Caco-2 (cell line): ENCODE measurements at regions of chr1 and their contacts with region 1.

Region 1: DNA sequence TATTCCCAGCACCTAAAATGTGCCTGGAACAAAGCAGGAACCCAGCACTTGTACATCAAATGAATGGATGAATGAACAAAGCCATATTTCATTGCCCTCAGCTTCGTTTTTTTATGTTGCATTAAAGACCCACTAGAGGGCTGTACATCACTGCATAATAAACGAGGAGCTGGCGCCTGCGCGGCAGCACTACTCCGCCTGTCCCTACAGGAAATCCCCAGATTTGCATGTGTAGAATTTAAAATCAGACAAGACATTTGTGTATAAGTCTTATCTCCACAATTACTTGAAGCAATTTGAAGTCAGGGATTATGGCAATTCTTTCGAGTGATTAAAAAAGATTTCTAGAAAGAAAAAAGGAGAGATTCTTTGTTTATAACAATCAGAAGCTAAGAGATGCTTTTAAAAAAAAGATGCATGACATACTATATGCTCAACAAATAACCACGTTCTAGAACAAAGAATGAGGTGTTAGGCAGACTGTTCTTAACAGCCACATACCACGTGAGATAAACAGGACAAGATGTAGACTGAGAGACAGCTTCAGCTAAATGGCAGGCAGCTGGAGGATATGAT is 5.4 kb upstream of the NEK2 start:
- DNase-seq: peak; percentile 74 to 78
- H3K4me3 ChIP-seq: no peak overlapping the region
- H3K4me3 Mint-ChIP-seq: no peak overlapping the region
- H3K27ac Mint-ChIP-seq: no peak overlapping the region
- H3K4me1 ChIP-seq: no peaks in the 10 kb centered on the region
- H3K4me1 Mint-ChIP-seq: peaks cover 14% of the 10 kb centered on the region
- H3K27me3 ChIP-seq: no peaks in the 10 kb centered on the region
- H3K27me3 Mint-ChIP-seq: no peaks in the 10 kb centered on the region
- CTCF ChIP-seq: peak; percentile 68 to 86

Region 2: DNA sequence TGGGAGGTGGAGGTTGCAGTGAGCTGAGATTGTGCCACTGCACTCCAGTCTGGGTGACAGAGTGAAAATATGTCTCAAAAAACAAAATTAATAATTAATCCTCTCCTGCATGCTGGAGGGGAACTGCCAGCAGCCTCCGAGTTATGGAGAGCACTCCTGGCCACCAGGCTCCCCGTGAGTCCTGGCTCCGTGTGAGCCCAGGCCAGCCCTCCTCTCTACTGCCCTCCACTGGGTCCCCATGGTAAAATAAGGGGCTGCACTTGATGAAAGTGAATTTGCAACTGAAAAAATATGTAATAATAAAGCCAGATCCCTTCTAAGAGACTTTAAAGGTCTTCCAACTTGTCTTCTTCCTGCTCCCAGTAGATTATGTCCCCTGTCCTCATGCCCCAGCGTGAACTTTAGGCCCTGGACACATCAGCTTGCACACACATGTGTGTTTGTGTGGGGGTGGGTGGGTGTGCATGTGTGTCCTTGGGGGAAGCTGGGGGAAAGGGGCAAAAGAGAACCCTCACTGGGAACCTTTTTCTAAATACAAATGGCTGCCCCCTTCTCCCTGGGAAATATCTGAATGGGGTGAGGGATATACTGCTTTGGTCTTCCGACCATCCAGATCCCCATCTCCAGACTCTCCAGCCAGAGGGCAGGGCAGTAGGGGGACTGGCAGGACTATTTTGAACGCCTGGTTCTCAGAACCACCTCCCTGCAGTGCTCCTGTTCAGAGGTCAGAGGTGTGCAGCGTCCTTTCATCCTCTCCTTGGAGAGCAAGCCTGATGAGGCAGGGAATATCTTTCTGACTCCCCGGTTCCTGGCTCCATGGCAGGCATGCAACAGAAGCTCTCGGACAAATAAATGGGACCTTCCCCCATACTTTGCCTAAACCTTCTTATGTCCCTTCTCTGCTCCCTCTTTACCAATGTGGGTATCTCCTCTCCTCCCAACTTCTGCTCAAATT is 31.6 kb before region 1 on chr1:
- CTCF ChIA-PET with region 1: no interaction called
- POLR2A ChIA-PET with region 1: no interaction called
- intact Hi-C with region 1: no loop called
- DNase-seq: peak; percentile 63 to 72
- H3K4me3 ChIP-seq: no peak overlapping the region
- H3K4me3 Mint-ChIP-seq: no peak overlapping the region
- H3K27ac Mint-ChIP-seq: peak overlapping the region; percentile 61
- H3K4me1 ChIP-seq: peaks cover 42% of the 10 kb centered on the region
- H3K4me1 Mint-ChIP-seq: peaks cover 19% of the 10 kb centered on the region
- H3K27me3 ChIP-seq: no peaks in the 10 kb centered on the region
- H3K27me3 Mint-ChIP-seq: no peaks in the 10 kb centered on the region
- CTCF ChIP-seq: peak; percentile 50 to 63

Region 3: GRCh38 chr1:211698161-211699026 is 17.6 kb after region 1 on chr1:
- CTCF ChIA-PET with region 1: interaction called, 10 read pairs
- POLR2A ChIA-PET with region 1: interaction called, 5 read pairs
- intact Hi-C with region 1: no loop called
- DNase-seq: peak; percentile 64 to 74
- H3K4me3 ChIP-seq: no peak overlapping the region
- H3K4me3 Mint-ChIP-seq: no peak overlapping the region
- H3K27ac Mint-ChIP-seq: no peak overlapping the region
- H3K4me1 ChIP-seq: 0 out of 2 replicates have a peak, but pooled peaks cover 5% of the 10 kb centered on the region
- H3K4me1 Mint-ChIP-seq: no peaks in the 10 kb centered on the region
- H3K27me3 ChIP-seq: no peaks in the 10 kb centered on the region
- H3K27me3 Mint-ChIP-seq: no peaks in the 10 kb centered on the region
- CTCF ChIP-seq: peak; percentile 72 to 86

Region 4: DNA sequence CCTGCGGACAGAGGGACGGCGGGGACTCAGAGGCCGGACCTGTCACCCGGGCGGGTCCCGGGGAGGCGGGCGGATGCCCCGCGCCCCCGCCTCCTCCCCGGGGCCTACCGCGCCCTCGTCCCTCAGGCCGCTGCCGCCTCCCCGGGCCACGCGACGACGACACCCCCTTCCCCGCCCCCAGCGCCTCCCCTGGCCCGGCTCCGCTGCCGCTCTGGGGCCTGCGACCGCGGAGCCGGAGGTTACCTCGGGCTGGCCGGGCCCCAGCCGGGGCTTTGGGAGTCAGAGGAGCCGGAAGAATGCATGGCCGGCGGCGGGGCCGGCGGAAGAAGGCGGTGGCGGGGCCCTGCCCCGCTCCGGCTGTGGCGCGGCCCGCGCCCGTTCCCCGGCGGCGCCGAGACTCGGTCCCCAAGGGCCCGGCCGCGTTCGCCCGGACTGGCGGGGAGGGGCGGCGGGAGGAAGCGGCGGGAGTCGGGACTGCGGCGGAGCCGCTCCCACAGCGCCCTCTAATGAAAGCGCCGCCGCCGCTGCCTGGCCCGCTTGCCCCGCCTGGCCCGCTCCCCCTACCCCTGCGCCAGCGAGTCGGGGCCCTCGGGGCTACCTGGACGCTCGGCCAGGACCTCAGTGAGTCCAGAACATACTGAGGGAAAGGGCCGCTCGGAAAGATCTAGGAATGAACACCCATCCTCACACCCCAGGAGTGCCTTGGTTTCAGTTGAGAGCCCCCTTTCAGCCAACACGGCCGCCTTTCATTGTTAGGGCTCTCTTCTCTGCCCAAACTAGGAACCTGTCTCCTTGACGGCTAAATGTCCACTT is 149.7 kb after region 1 on chr1 and contains the start of gene LPGAT1:
- CTCF ChIA-PET with region 1: interaction called, 8 read pairs
- POLR2A ChIA-PET with region 1: no interaction called
- intact Hi-C with region 1: loop called (anchors 1 kb)
- DNase-seq: peak; percentile 70 to 87
- H3K4me3 ChIP-seq: peak within 1 kb of the TSS; percentile 56
- H3K4me3 Mint-ChIP-seq: peak within 1 kb of the TSS; percentile 96
- H3K27ac Mint-ChIP-seq: peak within 1 kb of the TSS; percentile 76
- H3K4me1 ChIP-seq: no peaks in the 10 kb centered on the region
- H3K4me1 Mint-ChIP-seq: peaks cover 5% of the 10 kb centered on the region
- H3K27me3 ChIP-seq: no peaks in the 10 kb centered on the region
- H3K27me3 Mint-ChIP-seq: no peaks in the 10 kb centered on the region
- CTCF ChIP-seq: peak; percentile 49 to 55
- total RNA-seq, gene LPGAT1: 25.6 and 34.0 TPM in 2 replicates

Region 5: GRCh38 chr1:211944733-211945500 is 264.1 kb after region 1 on chr1:
- CTCF ChIA-PET with region 1: interaction called, 12 read pairs
- POLR2A ChIA-PET with region 1: no interaction called
- intact Hi-C with region 1: loop called (anchors 1 kb)
- DNase-seq: peak; percentile 53 to 64
- H3K4me3 ChIP-seq: no peak overlapping the region
- H3K4me3 Mint-ChIP-seq: no peak overlapping the region
- H3K27ac Mint-ChIP-seq: no peak overlapping the region
- H3K4me1 ChIP-seq: no peaks in the 10 kb centered on the region
- H3K4me1 Mint-ChIP-seq: no peaks in the 10 kb centered on the region
- H3K27me3 ChIP-seq: no peaks in the 10 kb centered on the region
- H3K27me3 Mint-ChIP-seq: no peaks in the 10 kb centered on the region
- CTCF ChIP-seq: peak; percentile 37 to 85

Region 6: GRCh38 chr1:212035123-212035834 is 354.4 kb after region 1 on chr1 and contains the starts of genes DTL and INTS7:
- CTCF ChIA-PET with region 1: interaction called, 109 read pairs
- POLR2A ChIA-PET with region 1: interaction called, 14 read pairs
- intact Hi-C with region 1: loop called (anchors 1 kb)
- DNase-seq: peak; percentile 98 to 99
- H3K4me3 ChIP-seq: peak within 1 kb of the TSS; percentile 85
- H3K4me3 Mint-ChIP-seq: peak within 1 kb of the TSS; percentile 96
- H3K27ac Mint-ChIP-seq: peak within 1 kb of the TSS; percentile 96
- H3K4me1 ChIP-seq: no peaks in the 10 kb centered on the region; the same call in 1 of the 2 replicates
- H3K4me1 Mint-ChIP-seq: peaks cover 35% of the 10 kb centered on the region
- H3K27me3 ChIP-seq: no peaks in the 10 kb centered on the region
- H3K27me3 Mint-ChIP-seq: no peaks in the 10 kb centered on the region
- CTCF ChIP-seq: peak; percentile 88 to 89
- total RNA-seq, gene DTL: 20.3 and 23.6 TPM in 2 replicates
- total RNA-seq, gene INTS7: 28.1 and 31.9 TPM in 2 replicates

Region 7: DNA sequence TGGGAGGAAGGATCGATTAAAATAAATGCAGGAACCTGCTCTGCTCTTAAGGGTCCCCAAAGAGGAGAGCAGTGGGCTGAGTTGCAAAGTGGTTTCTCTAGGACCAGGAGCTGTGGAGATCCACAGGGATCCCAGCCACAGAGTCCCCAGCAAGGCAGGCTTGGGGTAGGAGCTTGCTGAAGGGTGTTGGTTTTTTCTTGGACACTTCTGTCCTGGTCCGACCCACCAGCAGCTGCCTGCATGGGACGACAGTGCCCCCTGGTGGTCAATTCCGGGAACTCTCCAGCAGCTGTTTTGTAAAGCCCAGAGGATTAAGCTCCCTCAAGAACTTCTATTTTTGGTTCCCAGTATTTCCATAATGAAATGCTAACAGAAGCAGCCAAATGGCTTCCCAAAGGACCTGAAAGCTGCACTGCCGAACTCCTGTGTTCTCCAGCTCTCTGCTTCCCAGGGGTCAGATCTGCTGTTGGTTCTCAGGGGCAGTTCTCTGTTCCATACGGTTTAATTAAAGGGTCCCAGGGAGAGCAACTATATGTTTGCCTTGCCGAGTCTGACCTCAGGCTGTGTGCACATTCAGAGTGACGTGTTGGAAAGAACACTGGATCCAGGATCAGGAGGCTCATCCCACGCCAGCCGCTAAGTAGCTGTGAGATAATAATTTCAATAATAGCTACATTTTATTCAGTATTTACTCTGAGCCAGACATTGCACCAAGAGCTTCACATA is 775.1 kb after region 1 on chr1:
- CTCF ChIA-PET with region 1: interaction called, 7 read pairs
- POLR2A ChIA-PET with region 1: no interaction called
- intact Hi-C with region 1: loop called (anchors 5 kb)
- DNase-seq: peak; percentile 82 to 92
- H3K4me3 ChIP-seq: no peak overlapping the region
- H3K4me3 Mint-ChIP-seq: no peak overlapping the region
- H3K27ac Mint-ChIP-seq: no peak overlapping the region
- H3K4me1 ChIP-seq: peaks cover 3% of the 10 kb centered on the region; the same call in 1 of the 2 replicates
- H3K4me1 Mint-ChIP-seq: peaks cover 15% of the 10 kb centered on the region
- H3K27me3 ChIP-seq: no peaks in the 10 kb centered on the region
- H3K27me3 Mint-ChIP-seq: no peaks in the 10 kb centered on the region
- CTCF ChIP-seq: peak; percentile 98